ENCODE measurements at regions of chr1 and their contacts with region 1.

Region 1: DNA sequence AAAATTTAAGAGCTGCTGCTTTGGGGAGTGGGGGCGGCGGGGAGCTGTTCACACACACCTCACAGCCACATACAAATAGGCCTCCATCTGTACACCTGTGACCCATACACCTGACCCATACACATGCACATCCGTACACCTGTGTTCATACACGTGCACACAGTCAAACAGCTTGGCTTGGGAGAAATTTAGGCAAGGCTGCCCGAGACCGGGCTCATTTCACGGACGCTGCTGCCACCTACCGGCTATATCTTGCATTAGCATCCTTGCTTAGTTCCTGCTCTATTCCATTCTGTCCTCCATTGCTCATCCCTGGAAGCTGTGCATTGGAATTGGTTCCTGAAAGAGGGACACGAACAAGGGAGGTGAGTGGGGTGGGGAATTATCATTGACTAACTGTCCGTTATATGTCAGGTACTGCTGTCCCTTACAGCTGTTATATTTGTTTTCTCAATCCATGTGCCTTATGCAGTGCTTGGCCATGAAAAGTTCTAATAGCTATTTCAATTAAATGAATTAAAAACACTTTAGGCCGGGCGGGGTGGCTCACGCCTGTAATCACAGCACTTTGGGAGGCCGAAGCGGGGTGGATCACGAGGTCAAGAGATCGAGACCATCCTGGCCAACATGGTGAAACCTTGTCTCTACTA is 37.1 kb upstream of the EPB41 start:
- DNase-seq: no peak
- H3K4me3 ChIP-seq: no peak overlapping the region
- H3K27me3 ChIP-seq: peaks cover 2% of the 10 kb centered on the region; the same call in 1 of the 2 replicates
- CTCF ChIP-seq: peak; percentile 85

Region 2: GRCh38 chr1:28766532-28767183 is 110.6 kb before region 1 on chr1:
- CTCF ChIA-PET with region 1: interaction called, 11 read pairs
- POLR2A ChIA-PET with region 1: no interaction called
- DNase-seq: no peak
- H3K4me3 ChIP-seq: no peak overlapping the region
- H3K27me3 ChIP-seq: no peaks in the 10 kb centered on the region
- CTCF ChIP-seq: no peak

Region 3: GRCh38 chr1:28792644-28793121 is 84.6 kb before region 1 on chr1:
- CTCF ChIA-PET with region 1: interaction called, 276 read pairs
- POLR2A ChIA-PET with region 1: no interaction called
- DNase-seq: no peak
- H3K4me3 ChIP-seq: no peak overlapping the region
- H3K27me3 ChIP-seq: peaks cover 5% of the 10 kb centered on the region; the same call in 1 of the 2 replicates
- CTCF ChIP-seq: peak; percentile 4; the same call in 1 of the 2 replicates

Region 4: DNA sequence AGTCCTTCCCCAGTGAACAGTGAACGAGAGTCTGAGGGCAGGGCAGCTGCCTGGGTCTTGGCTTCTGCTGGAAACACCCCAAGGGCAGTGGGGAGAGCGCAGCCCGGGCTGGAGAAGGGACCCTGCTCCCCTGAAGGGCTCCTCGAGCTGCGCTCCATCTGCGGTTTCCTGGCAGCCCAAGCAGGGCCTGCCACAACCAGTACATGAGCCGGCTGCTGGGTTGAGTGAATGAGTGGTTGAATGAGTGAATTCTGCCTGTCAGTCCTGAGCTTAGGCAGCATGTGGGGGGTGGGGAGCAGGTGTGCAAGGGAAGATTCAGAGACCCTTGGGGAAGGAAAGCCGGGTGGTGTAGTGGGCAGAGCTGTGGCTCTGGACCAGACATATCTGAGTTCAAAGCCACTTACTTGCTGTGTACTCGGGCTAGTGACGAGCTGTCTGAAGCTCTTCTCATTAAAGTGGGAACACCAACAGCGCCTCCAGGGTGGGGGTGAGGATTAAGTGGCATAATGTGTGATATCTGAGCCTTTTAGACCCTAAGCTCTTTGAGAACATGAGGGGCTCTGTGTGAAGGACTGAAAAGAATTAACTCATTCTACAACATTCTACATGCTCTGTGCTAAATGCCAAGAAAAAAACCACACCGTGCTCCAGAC is 61.6 kb before region 1 on chr1:
- CTCF ChIA-PET with region 1: interaction called, 14 read pairs
- POLR2A ChIA-PET with region 1: no interaction called
- DNase-seq: no peak
- H3K4me3 ChIP-seq: no peak overlapping the region
- H3K27me3 ChIP-seq: peaks cover 45% of the 10 kb centered on the region
- CTCF ChIP-seq: no peak

Region 5: GRCh38 chr1:28865997-28866650 is 11.1 kb before region 1 on chr1:
- CTCF ChIA-PET with region 1: interaction called, 27 read pairs
- POLR2A ChIA-PET with region 1: no interaction called
- DNase-seq: no peak
- H3K4me3 ChIP-seq: no peak overlapping the region
- H3K27me3 ChIP-seq: peaks cover 16% of the 10 kb centered on the region
- CTCF ChIP-seq: no peak

Region 6: GRCh38 chr1:29202584-29203340 is 325.5 kb after region 1 on chr1:
- CTCF ChIA-PET with region 1: interaction called, 203 read pairs
- POLR2A ChIA-PET with region 1: no interaction called
- DNase-seq: peak; percentile 88
- H3K4me3 ChIP-seq: no peak overlapping the region
- H3K27me3 ChIP-seq: no peaks in the 10 kb centered on the region
- CTCF ChIP-seq: peak; percentile 96

Measured in BJ (cell line).